ENCODE measurements at regions of chr6 and their contacts with region 1.

Region 1: DNA sequence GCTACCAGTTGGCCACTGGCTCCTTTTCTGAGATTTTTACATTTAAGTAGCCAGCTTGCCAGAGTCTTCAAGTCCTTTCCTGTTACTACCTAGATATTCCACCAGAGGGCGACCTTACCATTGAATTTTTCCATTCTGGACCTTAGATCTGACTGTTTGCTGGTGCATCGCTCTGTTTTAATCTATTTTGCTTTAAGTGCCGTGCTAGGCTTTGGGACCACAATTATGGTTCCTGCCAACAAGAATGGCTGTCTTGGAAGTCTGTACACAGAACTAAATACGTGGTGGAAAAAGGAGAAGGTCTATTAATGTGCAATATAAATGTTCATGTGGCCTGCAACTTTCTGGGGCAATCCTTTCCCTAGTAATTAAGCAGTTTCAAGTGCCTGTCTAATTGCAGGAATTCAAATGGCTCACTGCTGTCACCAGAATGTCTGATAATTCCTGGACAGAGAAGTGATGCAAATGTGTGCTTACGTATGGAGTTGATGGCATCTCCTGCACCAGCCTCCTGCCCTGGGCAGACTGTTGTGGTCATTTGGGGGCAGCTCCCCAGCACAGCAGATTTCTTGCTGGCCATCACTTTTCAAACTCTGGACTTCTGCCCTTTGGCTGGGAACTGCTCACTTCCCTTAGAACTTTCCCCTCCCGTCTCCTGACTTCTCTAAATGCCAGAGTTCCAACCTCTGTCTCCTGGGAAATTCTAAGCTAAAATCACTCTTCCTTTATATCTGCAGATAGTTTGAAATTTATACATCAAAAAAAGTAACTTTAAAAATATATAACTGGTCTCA is 5.6 kb upstream of the HLA-DOA start:
- DNase-seq: peak; percentile 92
- ATAC-seq: peak; percentile 34
- H3K4me3 ChIP-seq: peak overlapping the region in 2 of 5 experiments; percentile 16 to 40
- H3K4me3 Mint-ChIP-seq: peak overlapping the region; percentile 69
- H3K27ac ChIP-seq: peak overlapping the region; percentile 2 to 100
- H3K27ac Mint-ChIP-seq: peak overlapping the region; percentile 90
- H3K4me1 ChIP-seq: peaks cover 51 to 57% of the 10 kb centered on the region in 2 donors
- H3K4me1 Mint-ChIP-seq: peaks cover 70% of the 10 kb centered on the region
- H3K27me3 ChIP-seq: no peaks in the 10 kb centered on the region
- H3K27me3 Mint-ChIP-seq: no peaks in the 10 kb centered on the region
- CTCF ChIP-seq: peak; percentile 85

Region 2: GRCh38 chr6:32816746-32817204 is 198.3 kb before region 1 on chr6 and contains the start of gene HLA-DOB:
- CTCF ChIA-PET with region 1: no interaction called
- POLR2A ChIA-PET with region 1: no interaction called
- intact Hi-C with region 1: no loop called
- DNase-seq: peak; percentile 87
- ATAC-seq: peak; percentile 76
- H3K4me3 ChIP-seq: peak within 1 kb of the TSS; percentile 91 to 97 (median 95)
- H3K4me3 Mint-ChIP-seq: peak within 1 kb of the TSS; percentile 99
- H3K27ac ChIP-seq: peak within 1 kb of the TSS; percentile 92 to 98
- H3K27ac Mint-ChIP-seq: peak within 1 kb of the TSS; percentile 99
- H3K4me1 ChIP-seq: peaks cover 77 to 80% of the 10 kb centered on the region in 2 donors
- H3K4me1 Mint-ChIP-seq: peaks cover 90% of the 10 kb centered on the region
- H3K27me3 ChIP-seq: no peaks in the 10 kb centered on the region
- H3K27me3 Mint-ChIP-seq: no peaks in the 10 kb centered on the region
- CTCF ChIP-seq: no peak
- total RNA-seq, gene HLA-DOB: 109 TPM in 2 replicates

Region 3: DNA sequence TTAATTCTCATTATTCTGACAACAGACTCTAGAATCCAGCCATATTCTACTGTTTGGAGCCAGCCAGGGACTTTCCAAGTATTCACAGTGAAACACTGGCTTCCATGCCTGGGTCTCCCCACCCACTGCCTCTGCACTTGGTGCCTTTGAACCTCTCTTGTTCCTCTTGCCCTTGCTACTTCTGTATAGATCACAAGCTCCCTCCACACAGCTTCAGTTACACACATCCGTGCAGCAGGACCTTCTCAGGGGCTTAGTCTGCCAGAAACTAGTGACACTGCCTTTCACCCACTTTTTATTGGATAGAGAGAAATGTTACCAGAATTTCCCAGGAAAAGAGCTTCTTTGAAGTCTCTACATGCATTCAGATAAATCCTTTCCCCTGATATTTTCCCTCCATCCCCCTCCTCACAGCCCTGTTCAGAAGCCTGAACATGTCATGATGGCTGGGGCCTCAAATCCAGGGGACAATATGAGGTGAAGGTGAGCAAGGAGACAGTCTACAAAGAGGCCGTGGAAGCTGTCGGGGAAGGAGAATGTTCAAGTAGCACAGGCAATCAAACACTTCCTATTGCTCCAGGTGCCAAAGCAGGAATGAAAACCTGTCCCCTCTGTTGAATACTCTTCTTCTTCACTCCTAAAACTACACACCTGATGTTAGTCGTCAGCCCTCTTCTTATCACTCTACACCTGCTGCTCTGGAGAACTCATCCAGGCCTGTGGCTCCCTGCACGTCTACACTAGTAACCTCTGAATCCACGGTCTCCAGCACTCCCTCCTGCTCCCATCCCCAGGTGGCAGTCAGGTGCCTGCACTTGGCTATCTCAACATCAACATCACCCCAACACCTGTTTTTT is 14.5 kb after region 1 on chr6:
- CTCF ChIA-PET with region 1: interaction called, 75 read pairs
- POLR2A ChIA-PET with region 1: interaction called, 64 read pairs
- intact Hi-C with region 1: loop called (anchors 1 kb)
- DNase-seq: peak; percentile 96
- ATAC-seq: peak; percentile 75
- H3K4me3 ChIP-seq: peak overlapping the region in 4 of 5 experiments; percentile 25 to 51 (median 33)
- H3K4me3 Mint-ChIP-seq: peak overlapping the region; percentile 71
- H3K27ac ChIP-seq: peak overlapping the region; percentile 99
- H3K27ac Mint-ChIP-seq: peak overlapping the region; percentile 99
- H3K4me1 ChIP-seq: peaks cover 45 to 54% of the 10 kb centered on the region in 2 donors
- H3K4me1 Mint-ChIP-seq: peaks cover 63% of the 10 kb centered on the region
- H3K27me3 ChIP-seq: no peaks in the 10 kb centered on the region
- H3K27me3 Mint-ChIP-seq: no peaks in the 10 kb centered on the region
- CTCF ChIP-seq: no peak

Region 4: DNA sequence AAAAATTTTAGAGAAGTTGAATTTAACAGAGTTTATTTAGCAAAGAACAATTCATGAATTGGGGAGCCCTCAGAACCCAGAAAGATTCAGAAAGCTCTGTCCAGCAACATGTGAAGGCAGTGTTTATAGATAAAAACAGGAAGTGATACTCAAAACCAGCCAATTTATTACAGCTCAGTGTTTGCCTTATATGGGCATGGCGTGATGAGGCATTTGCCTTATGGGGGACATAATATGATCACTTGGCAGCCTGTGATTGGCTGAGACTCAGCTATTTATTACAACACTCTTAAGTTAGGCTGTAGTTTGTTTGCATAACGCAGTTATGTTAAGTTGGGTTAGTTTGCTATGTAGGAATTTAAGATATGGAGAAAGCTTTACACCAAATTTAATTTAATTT is 46.9 kb after region 1 on chr6:
- CTCF ChIA-PET with region 1: interaction called, 7 read pairs
- POLR2A ChIA-PET with region 1: interaction called, 7 read pairs
- intact Hi-C with region 1: loop called (anchors 1 kb)
- DNase-seq: peak; percentile 85
- ATAC-seq: peak; percentile 70
- H3K4me3 ChIP-seq: peak overlapping the region in 1 of 5 experiments; percentile 6
- H3K4me3 Mint-ChIP-seq: peak overlapping the region; percentile 1
- H3K27ac ChIP-seq: peak overlapping the region in 1 of 2 donors; percentile 70
- H3K27ac Mint-ChIP-seq: peak overlapping the region; percentile 93
- H3K4me1 ChIP-seq: peaks cover 32 to 34% of the 10 kb centered on the region in 2 donors
- H3K4me1 Mint-ChIP-seq: peaks cover 44% of the 10 kb centered on the region
- H3K27me3 ChIP-seq: no peaks in the 10 kb centered on the region
- H3K27me3 Mint-ChIP-seq: no peaks in the 10 kb centered on the region
- CTCF ChIP-seq: no peak

Region 5: GRCh38 chr6:33082702-33083101 is 67.7 kb after region 1 on chr6:
- CTCF ChIA-PET with region 1: interaction called, 576 read pairs
- POLR2A ChIA-PET with region 1: interaction called, 36 read pairs
- intact Hi-C with region 1: loop called (anchors 1 kb)
- DNase-seq: peak; percentile 65
- ATAC-seq: peak; percentile 63
- H3K4me3 ChIP-seq: peak overlapping the region in 1 of 5 experiments; percentile 7
- H3K4me3 Mint-ChIP-seq: peak overlapping the region; percentile 78
- H3K27ac ChIP-seq: peak overlapping the region; percentile 27 to 82
- H3K27ac Mint-ChIP-seq: peak overlapping the region; percentile 89
- H3K4me1 ChIP-seq: peaks cover 59 to 60% of the 10 kb centered on the region in 2 donors
- H3K4me1 Mint-ChIP-seq: peaks cover 72% of the 10 kb centered on the region
- H3K27me3 ChIP-seq: no peaks in the 10 kb centered on the region
- H3K27me3 Mint-ChIP-seq: no peaks in the 10 kb centered on the region
- CTCF ChIP-seq: peak; percentile 68

Region 6: GRCh38 chr6:33112148-33112547 is 97.1 kb after region 1 on chr6:
- CTCF ChIA-PET with region 1: interaction called, 10 read pairs
- POLR2A ChIA-PET with region 1: interaction called, 4 read pairs
- intact Hi-C with region 1: no loop called
- DNase-seq: peak; percentile 87
- ATAC-seq: peak; percentile 95
- H3K4me3 ChIP-seq: peak overlapping the region in 4 of 5 experiments; percentile 36 to 60 (median 47)
- H3K4me3 Mint-ChIP-seq: peak overlapping the region; percentile 71
- H3K27ac ChIP-seq: peak overlapping the region; percentile 80 to 88
- H3K27ac Mint-ChIP-seq: peak overlapping the region; percentile 87
- H3K4me1 ChIP-seq: peaks cover 50 to 54% of the 10 kb centered on the region in 2 donors
- H3K4me1 Mint-ChIP-seq: peaks cover 54% of the 10 kb centered on the region
- H3K27me3 ChIP-seq: no peaks in the 10 kb centered on the region
- H3K27me3 Mint-ChIP-seq: no peaks in the 10 kb centered on the region
- CTCF ChIP-seq: no peak

Region 7: GRCh38 chr6:33126101-33126714 is 111.2 kb after region 1 on chr6:
- CTCF ChIA-PET with region 1: interaction called, 109 read pairs
- POLR2A ChIA-PET with region 1: interaction called, 8 read pairs
- intact Hi-C with region 1: loop called (anchors 1 kb)
- DNase-seq: peak; percentile 77
- ATAC-seq: peak; percentile 63
- H3K4me3 ChIP-seq: no peak overlapping the region
- H3K4me3 Mint-ChIP-seq: no peak overlapping the region
- H3K27ac ChIP-seq: no peak overlapping the region
- H3K27ac Mint-ChIP-seq: peak overlapping the region; percentile 59
- H3K4me1 ChIP-seq: peaks cover 0 to 10% of the 10 kb centered on the region in 2 donors
- H3K4me1 Mint-ChIP-seq: peaks cover 5% of the 10 kb centered on the region
- H3K27me3 ChIP-seq: no peaks in the 10 kb centered on the region
- H3K27me3 Mint-ChIP-seq: no peaks in the 10 kb centered on the region
- CTCF ChIP-seq: peak; percentile 87